Ovary (tissue), 10 donors: ENCODE measurements at regions of chr6 and their contacts with region 1.

Region 1: GRCh38 chr6:16128759-16129622 is at the start of gene MYLIP:
- DNase-seq: peak; percentile 97 to 98 (median 98)
- H3K4me3 ChIP-seq: peak within 1 kb of the TSS; percentile 96
- H3K27ac ChIP-seq: peak within 1 kb of the TSS; percentile 70 to 96
- H3K4me1 ChIP-seq: peaks cover 3% of the 10 kb centered on the region
- H3K27me3 ChIP-seq: no peaks in the 10 kb centered on the region
- CTCF ChIP-seq: peak; percentile 59 to 73 (median 67)
- EP300 ChIP-seq: no peak
- POLR2A ChIP-seq: peak; percentile 96
- total RNA-seq, gene MYLIP: 11.0 to 45.4 (median 34.3) TPM

Region 2: GRCh38 chr6:16089232-16090062 is 39.5 kb before region 1 on chr6:
- intact Hi-C with region 1: no loop called
- DNase-seq: no peak
- H3K4me3 ChIP-seq: no peak overlapping the region
- H3K27ac ChIP-seq: no peak overlapping the region
- H3K4me1 ChIP-seq: no peaks in the 10 kb centered on the region
- H3K27me3 ChIP-seq: no peaks in the 10 kb centered on the region
- CTCF ChIP-seq: no peak
- EP300 ChIP-seq: no peak
- POLR2A ChIP-seq: no peak

Region 3: GRCh38 chr6:16216501-16217155 is 87.6 kb after region 1 on chr6:
- intact Hi-C with region 1: loop called in 1 of 4 experiments (anchors 10 kb)
- DNase-seq: peak in 3 of 5 donors; percentile 49 to 60 (median 54)
- H3K4me3 ChIP-seq: peak overlapping the region; percentile 15
- H3K27ac ChIP-seq: no peak overlapping the region
- H3K4me1 ChIP-seq: peaks cover 9% of the 10 kb centered on the region
- H3K27me3 ChIP-seq: no peaks in the 10 kb centered on the region
- CTCF ChIP-seq: no peak
- EP300 ChIP-seq: no peak
- POLR2A ChIP-seq: no peak

Region 4: DNA sequence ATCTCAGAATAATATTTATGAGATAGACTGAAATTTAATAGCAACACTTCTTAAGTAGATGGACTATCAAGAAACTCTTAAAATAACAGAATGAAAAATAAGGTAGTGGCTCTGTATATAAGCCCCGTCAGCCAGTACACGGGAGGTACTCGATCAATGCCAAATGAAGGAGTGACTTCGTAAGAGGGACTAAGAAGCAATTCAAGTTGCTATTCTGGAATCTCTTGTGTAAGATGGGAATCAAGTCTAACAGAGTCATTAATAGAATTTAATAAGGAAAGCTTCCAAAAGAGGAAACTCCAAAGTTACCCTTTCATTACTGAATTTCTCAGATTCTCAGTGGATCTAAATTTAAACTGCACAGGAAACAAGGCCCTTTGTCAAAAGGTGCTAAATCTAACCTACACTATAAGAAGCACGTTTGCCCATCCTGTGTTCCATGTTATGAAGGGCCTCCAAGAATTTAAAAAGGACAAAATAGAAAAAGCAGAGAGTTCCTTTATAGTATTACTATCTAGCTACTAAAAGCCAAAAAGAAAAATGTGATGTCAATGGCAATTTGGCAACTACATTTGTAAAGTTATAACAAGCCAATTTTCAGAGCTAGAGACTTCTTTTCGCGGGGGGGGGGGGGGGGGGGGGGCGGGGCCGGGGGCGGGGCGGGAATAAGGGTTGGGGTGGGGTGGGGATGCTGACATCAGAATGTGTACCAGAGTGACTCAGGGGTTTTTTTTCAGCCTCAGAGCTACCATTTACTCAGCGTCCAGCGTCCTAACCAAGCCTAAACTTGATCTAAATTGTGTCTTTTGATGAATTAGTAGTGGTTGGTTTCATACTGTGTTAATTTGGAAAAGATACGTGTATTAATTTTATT is 310.0 kb after region 1 on chr6:
- intact Hi-C with region 1: no loop called
- DNase-seq: no peak
- H3K4me3 ChIP-seq: no peak overlapping the region
- H3K27ac ChIP-seq: no peak overlapping the region
- H3K4me1 ChIP-seq: peaks cover 3% of the 10 kb centered on the region
- H3K27me3 ChIP-seq: no peaks in the 10 kb centered on the region
- CTCF ChIP-seq: no peak
- EP300 ChIP-seq: no peak
- POLR2A ChIP-seq: no peak